ENCODE measurements at regions of chr4 and their contacts with region 1.

Region 1: GRCh38 chr4:109294006-109294405 is 8.5 kb downstream of the COL25A1 start:
- DNase-seq: no peak
- H3K4me3 ChIP-seq: no peak overlapping the region
- H3K27ac ChIP-seq: no peak overlapping the region
- H3K4me1 ChIP-seq: no peaks in the 10 kb centered on the region
- H3K27me3 ChIP-seq: no peaks in the 10 kb centered on the region
- CTCF ChIP-seq: peak; percentile 52 to 85 (median 76)
- EP300 ChIP-seq: no peak
- POLR2A ChIP-seq: no peak
- RAD21 ChIP-seq: peak; percentile 82 to 86

Region 2: DNA sequence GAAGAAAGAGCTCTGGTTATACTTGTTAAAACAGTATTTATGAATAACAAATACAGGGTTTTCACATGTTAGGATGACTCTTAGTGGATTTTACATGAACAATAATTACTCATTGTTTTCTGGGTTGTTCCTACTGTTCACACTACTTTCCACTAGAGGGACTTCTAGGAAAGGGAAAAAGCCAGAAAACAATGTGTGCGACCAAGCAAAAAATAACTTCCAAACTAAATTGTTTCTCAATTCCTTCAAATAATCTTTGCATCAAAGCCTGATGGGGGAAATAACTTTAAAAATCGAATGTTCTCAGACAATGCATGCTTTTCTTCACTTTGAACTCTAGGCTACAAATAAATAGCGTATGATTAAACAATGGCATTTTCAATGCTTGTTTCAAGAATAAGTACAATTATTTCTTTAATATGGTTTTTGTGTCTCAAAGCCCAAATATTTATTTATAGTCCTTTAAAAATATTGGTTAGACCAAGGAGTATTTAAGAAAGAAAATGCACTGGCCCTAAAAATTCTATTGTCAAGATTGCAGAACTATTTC is 459.1 kb before region 1 on chr4:
- CTCF ChIA-PET with region 1: interaction called, 11 read pairs
- POLR2A ChIA-PET with region 1: no interaction called
- DNase-seq: no peak
- H3K4me3 ChIP-seq: no peak overlapping the region
- H3K27ac ChIP-seq: no peak overlapping the region
- H3K4me1 ChIP-seq: no peaks in the 10 kb centered on the region
- H3K27me3 ChIP-seq: no peaks in the 10 kb centered on the region
- CTCF ChIP-seq: peak in 2 of 3 experiments; percentile 35 to 56; a peak in 2 of 4 replicates
- EP300 ChIP-seq: no peak
- POLR2A ChIP-seq: no peak
- RAD21 ChIP-seq: peak; percentile 86 to 93

Region 3: DNA sequence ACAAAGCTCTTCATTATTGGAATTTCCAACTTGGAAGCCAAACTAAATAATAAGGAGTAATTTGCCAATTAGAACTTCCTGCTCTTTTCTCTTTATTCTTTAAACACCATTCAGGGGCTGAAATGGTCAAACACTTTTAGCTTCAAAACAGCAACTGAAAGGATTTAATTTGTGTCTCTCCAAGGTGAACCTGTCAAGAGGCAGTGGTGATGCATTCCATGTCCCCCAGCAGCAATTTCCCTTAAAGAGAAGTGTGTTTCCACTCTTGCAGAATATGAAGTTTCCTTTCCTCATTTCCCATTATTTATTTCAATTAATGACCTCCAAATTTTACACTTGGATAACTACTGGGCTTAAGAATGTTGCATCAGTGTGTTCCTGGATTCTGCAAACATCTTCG is 147.5 kb before region 1 on chr4:
- CTCF ChIA-PET with region 1: no interaction called
- POLR2A ChIA-PET with region 1: no interaction called
- DNase-seq: no peak
- H3K4me3 ChIP-seq: no peak overlapping the region
- H3K27ac ChIP-seq: no peak overlapping the region
- H3K4me1 ChIP-seq: peaks cover 0 to 10% (median 2%) of the 10 kb centered on the region in 4 experiments; a peak in 2 of 7 replicates
- H3K27me3 ChIP-seq: no peaks in the 10 kb centered on the region
- CTCF ChIP-seq: no peak
- EP300 ChIP-seq: no peak
- POLR2A ChIP-seq: no peak
- RAD21 ChIP-seq: no peak

Region 4: GRCh38 chr4:109278594-109279031 is 15.4 kb before region 1 on chr4:
- CTCF ChIA-PET with region 1: interaction called, 15 read pairs
- POLR2A ChIA-PET with region 1: no interaction called
- DNase-seq: no peak
- H3K4me3 ChIP-seq: no peak overlapping the region
- H3K27ac ChIP-seq: no peak overlapping the region
- H3K4me1 ChIP-seq: no peaks in the 10 kb centered on the region
- H3K27me3 ChIP-seq: no peaks in the 10 kb centered on the region
- CTCF ChIP-seq: no peak
- EP300 ChIP-seq: no peak
- POLR2A ChIP-seq: no peak
- RAD21 ChIP-seq: no peak